ENCODE measurements at regions of chr12 and their contacts with region 1.

Region 1: GRCh38 chr12:25099010-25099409 is 96.0 kb downstream of the DNAI7 start:
- DNase-seq: no peak

Region 2: GRCh38 chr12:25041006-25041741 is 57.8 kb before region 1 on chr12:
- intact Hi-C with region 1: loop called in 1 of 2 experiments (anchors 2 kb)
- DNase-seq: no peak

Measured in posterior vena cava (tissue), 2 donors.